ENCODE measurements at regions of chr12 and their contacts with region 1.

Region 1: GRCh38 chr12:49967042-49967776 is 5.5 kb downstream of the AQP5 start:
- DNase-seq: peak; percentile 79
- H3K4me3 ChIP-seq: peak overlapping the region in 2 of 3 experiments; percentile 14 to 24
- H3K27ac ChIP-seq: no peak overlapping the region
- H3K4me1 ChIP-seq: peaks cover 11% of the 10 kb centered on the region
- H3K27me3 ChIP-seq: peaks cover 16 to 18% of the 10 kb centered on the region in 2 experiments
- CTCF ChIP-seq: peak; percentile 76 to 98
- POLR2A ChIP-seq: no peak

Region 2: GRCh38 chr12:49866859-49867579 is 100.2 kb before region 1 on chr12:
- CTCF ChIA-PET with region 1: interaction called, 183 read pairs
- POLR2A ChIA-PET with region 1: interaction called, 5 read pairs
- dilution Hi-C with region 1: no loop called
- intact Hi-C with region 1: loop called (anchors 1 kb)
- DNase-seq: peak; percentile 42
- H3K4me3 ChIP-seq: no peak overlapping the region
- H3K27ac ChIP-seq: no peak overlapping the region
- H3K4me1 ChIP-seq: peaks cover 20% of the 10 kb centered on the region
- H3K27me3 ChIP-seq: peaks cover 2 to 7% of the 10 kb centered on the region in 2 experiments
- CTCF ChIP-seq: peak; percentile 91 to 97
- POLR2A ChIP-seq: no peak

Region 3: GRCh38 chr12:49983892-49984291 is 16.7 kb after region 1 on chr12:
- CTCF ChIA-PET with region 1: interaction called, 126 read pairs
- POLR2A ChIA-PET with region 1: no interaction called
- dilution Hi-C with region 1: no loop called
- intact Hi-C with region 1: loop called (anchors 2 kb)
- DNase-seq: peak; percentile 87
- H3K4me3 ChIP-seq: no peak overlapping the region
- H3K27ac ChIP-seq: peak overlapping the region; percentile 24
- H3K4me1 ChIP-seq: peaks cover 14% of the 10 kb centered on the region
- H3K27me3 ChIP-seq: no peaks in the 10 kb centered on the region
- CTCF ChIP-seq: no peak
- POLR2A ChIP-seq: no peak

Region 4: GRCh38 chr12:50032639-50033581 is 65.7 kb after region 1 on chr12:
- CTCF ChIA-PET with region 1: interaction called, 37 read pairs
- POLR2A ChIA-PET with region 1: no interaction called
- dilution Hi-C with region 1: no loop called
- intact Hi-C with region 1: no loop called
- DNase-seq: no peak
- H3K4me3 ChIP-seq: peak overlapping the region in 1 of 3 experiments; percentile 10
- H3K27ac ChIP-seq: no peak overlapping the region
- H3K4me1 ChIP-seq: no peaks in the 10 kb centered on the region
- H3K27me3 ChIP-seq: peaks cover 21 to 22% of the 10 kb centered on the region in 2 experiments
- CTCF ChIP-seq: no peak
- POLR2A ChIP-seq: no peak

Region 5: GRCh38 chr12:50055831-50056638 is 88.8 kb after region 1 on chr12:
- CTCF ChIA-PET with region 1: interaction called, 317 read pairs
- POLR2A ChIA-PET with region 1: no interaction called
- dilution Hi-C with region 1: loop called (anchors 25 kb)
- intact Hi-C with region 1: loop called (anchors 1 kb)
- DNase-seq: peak; percentile 59
- H3K4me3 ChIP-seq: no peak overlapping the region
- H3K27ac ChIP-seq: no peak overlapping the region
- H3K4me1 ChIP-seq: peaks cover 5% of the 10 kb centered on the region
- H3K27me3 ChIP-seq: peaks cover 54 to 56% of the 10 kb centered on the region in 2 experiments
- CTCF ChIP-seq: peak; percentile 95 to 96
- POLR2A ChIP-seq: no peak

Region 6: DNA sequence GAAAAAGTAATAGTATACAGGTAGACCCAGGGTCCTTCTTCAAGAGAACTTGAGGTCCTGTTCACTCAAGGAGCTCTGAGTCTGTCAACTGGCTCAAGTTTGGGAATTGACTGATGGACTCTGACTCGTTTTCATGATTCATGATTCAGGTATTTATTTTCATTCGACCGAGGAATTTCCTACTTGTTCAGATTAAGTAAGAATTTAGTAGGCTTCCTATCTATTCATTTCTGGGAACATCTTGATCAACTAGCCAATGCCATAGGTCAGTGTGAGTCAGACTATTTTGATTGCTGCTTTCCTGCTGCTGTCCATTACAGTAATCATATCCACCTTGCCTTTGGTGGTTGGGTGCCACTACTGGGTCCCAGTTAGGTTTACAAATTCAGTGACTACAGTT is 423.1 kb after region 1 on chr12:
- CTCF ChIA-PET with region 1: no interaction called
- POLR2A ChIA-PET with region 1: no interaction called
- dilution Hi-C with region 1: no loop called
- intact Hi-C with region 1: no loop called
- DNase-seq: peak; percentile 83
- H3K4me3 ChIP-seq: no peak overlapping the region
- H3K27ac ChIP-seq: peak overlapping the region; percentile 81
- H3K4me1 ChIP-seq: peaks cover 15% of the 10 kb centered on the region
- H3K27me3 ChIP-seq: no peaks in the 10 kb centered on the region
- CTCF ChIP-seq: no peak
- POLR2A ChIP-seq: no peak

Measured in endothelial cell of umbilical vein (primary cell).